K562 (cell line): ENCODE measurements at regions of chr9 and their contacts with region 1.

Region 1: GRCh38 chr9:19517202-19517942 is 108.6 kb downstream of the ACER2 start:
- DNase-seq: peak; percentile 30 to 54 (median 40)
- ATAC-seq: peak; percentile 80
- H3K4me3 ChIP-seq: no peak overlapping the region
- H3K27ac ChIP-seq: no peak overlapping the region
- H3K4me1 ChIP-seq: no peaks in the 10 kb centered on the region
- H3K27me3 ChIP-seq: no peaks in the 10 kb centered on the region; a peak in 1 of 5 replicates
- CTCF ChIP-seq: peak; percentile 52 to 65 (median 61)
- EP300 ChIP-seq: no peak
- POLR2A ChIP-seq: no peak
- RAD21 ChIP-seq: peak; percentile 36 to 71

Region 2: GRCh38 chr9:18928711-18929110 is 588.7 kb before region 1 on chr9:
- CTCF ChIA-PET with region 1: no interaction called
- POLR2A ChIA-PET with region 1: no interaction called
- in situ Hi-C with region 1: no loop called
- intact Hi-C with region 1: no loop called
- DNase-seq: no peak
- ATAC-seq: no peak
- H3K4me3 ChIP-seq: no peak overlapping the region
- H3K27ac ChIP-seq: no peak overlapping the region
- H3K4me1 ChIP-seq: no peaks in the 10 kb centered on the region
- H3K27me3 ChIP-seq: no peaks in the 10 kb centered on the region
- CTCF ChIP-seq: no peak
- EP300 ChIP-seq: no peak
- POLR2A ChIP-seq: no peak
- RAD21 ChIP-seq: no peak

Region 3: GRCh38 chr9:19320495-19320894 is 196.9 kb before region 1 on chr9:
- CTCF ChIA-PET with region 1: no interaction called
- POLR2A ChIA-PET with region 1: no interaction called
- in situ Hi-C with region 1: no loop called
- intact Hi-C with region 1: no loop called
- DNase-seq: no peak
- ATAC-seq: no peak
- H3K4me3 ChIP-seq: no peak overlapping the region
- H3K27ac ChIP-seq: no peak overlapping the region
- H3K4me1 ChIP-seq: no peaks in the 10 kb centered on the region
- H3K27me3 ChIP-seq: no peaks in the 10 kb centered on the region
- CTCF ChIP-seq: no peak
- EP300 ChIP-seq: no peak
- POLR2A ChIP-seq: no peak
- RAD21 ChIP-seq: no peak

Region 4: GRCh38 chr9:19641046-19641445 is 123.7 kb after region 1 on chr9:
- CTCF ChIA-PET with region 1: no interaction called
- POLR2A ChIA-PET with region 1: no interaction called
- in situ Hi-C with region 1: no loop called
- intact Hi-C with region 1: loop called (anchors 10 kb)
- DNase-seq: peak in 1 of 4 experiments; percentile 11
- ATAC-seq: no peak
- H3K4me3 ChIP-seq: no peak overlapping the region
- H3K27ac ChIP-seq: no peak overlapping the region
- H3K4me1 ChIP-seq: no peaks in the 10 kb centered on the region; a peak in 1 of 5 replicates
- H3K27me3 ChIP-seq: no peaks in the 10 kb centered on the region
- CTCF ChIP-seq: peak in 1 of 3 experiments; percentile 32; a peak in 3 of 6 replicates
- EP300 ChIP-seq: no peak
- POLR2A ChIP-seq: no peak
- RAD21 ChIP-seq: peak; percentile 25 to 48; a peak in 3 of 4 replicates

Region 5: DNA sequence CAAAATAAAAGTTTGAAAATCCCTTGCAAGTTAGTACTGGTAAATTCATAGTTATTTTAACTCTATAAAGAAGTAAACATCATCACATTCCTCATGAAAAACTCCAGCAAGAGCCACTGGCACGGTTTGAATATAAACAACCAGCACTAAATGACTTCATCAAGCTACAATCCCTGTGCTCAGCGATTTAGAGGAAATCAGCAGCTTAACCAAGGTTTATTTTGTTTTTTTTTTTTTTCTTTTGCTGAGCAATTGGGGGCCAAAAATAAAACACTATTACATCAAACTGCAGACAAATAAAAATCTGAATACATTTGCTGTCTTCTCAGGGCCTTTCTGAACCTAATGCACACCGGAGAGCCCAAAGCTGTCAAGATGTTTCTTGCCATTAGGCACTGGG is 377.6 kb after region 1 on chr9:
- CTCF ChIA-PET with region 1: no interaction called
- POLR2A ChIA-PET with region 1: no interaction called
- in situ Hi-C with region 1: no loop called
- intact Hi-C with region 1: no loop called
- DNase-seq: no peak
- ATAC-seq: no peak
- H3K4me3 ChIP-seq: no peak overlapping the region
- H3K27ac ChIP-seq: no peak overlapping the region
- H3K4me1 ChIP-seq: peaks cover 0 to 2% of the 10 kb centered on the region in 2 experiments; a peak in 1 of 5 replicates
- H3K27me3 ChIP-seq: no peaks in the 10 kb centered on the region
- CTCF ChIP-seq: no peak
- EP300 ChIP-seq: no peak
- POLR2A ChIP-seq: no peak
- RAD21 ChIP-seq: no peak